CD8-positive, alpha-beta T cell (primary cell): ENCODE measurements at regions of chr19 and their contacts with region 1.

Region 1: GRCh38 chr19:5790573-5791520 is at the start of gene DUS3L:
- DNase-seq: peak; percentile 91 to 98 (median 94)
- ATAC-seq: peak; percentile 95
- H3K4me3 ChIP-seq: peak within 1 kb of the TSS; percentile 86 to 91
- H3K4me3 Mint-ChIP-seq: peak within 1 kb of the TSS; percentile 97
- H3K27ac ChIP-seq: peak within 1 kb of the TSS; percentile 94 to 97
- H3K27ac Mint-ChIP-seq: peak within 1 kb of the TSS; percentile 99
- H3K4me1 ChIP-seq: peaks cover 7% of the 10 kb centered on the region
- H3K4me1 Mint-ChIP-seq: peaks cover 17% of the 10 kb centered on the region
- H3K27me3 ChIP-seq: no peaks in the 10 kb centered on the region
- H3K27me3 Mint-ChIP-seq: peaks cover 2% of the 10 kb centered on the region
- CTCF ChIP-seq: no peak
- total RNA-seq, gene DUS3L: 174 to 192 TPM

Region 2: DNA sequence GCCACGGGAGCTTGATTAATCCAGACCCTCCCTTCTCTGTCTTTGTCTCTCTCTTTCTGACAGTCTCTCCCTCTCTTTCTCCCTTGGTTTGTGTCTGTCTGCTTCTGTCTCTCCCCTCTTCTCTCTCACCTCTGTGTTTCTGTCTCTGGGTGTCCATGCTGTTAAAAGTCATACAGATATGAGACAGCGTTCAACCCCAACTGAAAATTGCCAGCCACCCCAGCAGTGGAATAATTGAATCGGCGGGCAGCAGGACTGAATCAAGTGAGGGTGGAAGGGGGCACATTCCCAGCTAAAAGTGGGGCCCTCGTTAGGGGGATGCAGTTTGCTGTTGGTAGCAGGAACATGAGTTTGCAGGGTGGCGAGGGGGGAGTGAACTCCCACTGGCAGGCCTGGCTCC is 266.8 kb before region 1 on chr19:
- CTCF ChIA-PET with region 1: no interaction called
- POLR2A ChIA-PET with region 1: no interaction called
- intact Hi-C with region 1: no loop called
- DNase-seq: no peak
- ATAC-seq: no peak
- H3K4me3 ChIP-seq: no peak overlapping the region
- H3K4me3 Mint-ChIP-seq: no peak overlapping the region
- H3K27ac ChIP-seq: no peak overlapping the region
- H3K27ac Mint-ChIP-seq: no peak overlapping the region
- H3K4me1 ChIP-seq: no peaks in the 10 kb centered on the region
- H3K4me1 Mint-ChIP-seq: no peaks in the 10 kb centered on the region
- H3K27me3 ChIP-seq: peaks cover 0 to 7% of the 10 kb centered on the region in 2 experiments
- H3K27me3 Mint-ChIP-seq: peaks cover 36% of the 10 kb centered on the region
- CTCF ChIP-seq: no peak

Region 3: GRCh38 chr19:5680437-5681368 is 110.1 kb before region 1 on chr19 and contains the starts of genes HSD11B1L and MICOS13:
- CTCF ChIA-PET with region 1: no interaction called
- POLR2A ChIA-PET with region 1: no interaction called
- intact Hi-C with region 1: loop called in 1 of 2 experiments (anchors 2 kb)
- DNase-seq: peak; percentile 95 to 100 (median 98)
- ATAC-seq: peak; percentile 94
- H3K4me3 ChIP-seq: peak within 1 kb of the TSS; percentile 94 to 96
- H3K4me3 Mint-ChIP-seq: peak within 1 kb of the TSS; percentile 90
- H3K27ac ChIP-seq: peak within 1 kb of the TSS; percentile 98 to 100
- H3K27ac Mint-ChIP-seq: peak within 1 kb of the TSS; percentile 96
- H3K4me1 ChIP-seq: peaks cover 15% of the 10 kb centered on the region
- H3K4me1 Mint-ChIP-seq: peaks cover 25% of the 10 kb centered on the region
- H3K27me3 ChIP-seq: no peaks in the 10 kb centered on the region
- H3K27me3 Mint-ChIP-seq: no peaks in the 10 kb centered on the region
- CTCF ChIP-seq: no peak
- total RNA-seq, gene HSD11B1L: 3.1 to 4.1 TPM
- total RNA-seq, gene MICOS13: 19.6 to 24.8 TPM

Region 4: GRCh38 chr19:5719961-5720790 is 70.7 kb before region 1 on chr19 and contains the starts of genes CATSPERD and LONP1:
- CTCF ChIA-PET with region 1: no interaction called
- POLR2A ChIA-PET with region 1: interaction called, 9 read pairs
- intact Hi-C with region 1: loop called in 1 of 2 experiments (anchors 1 kb)
- DNase-seq: peak; percentile 92 to 100 (median 97)
- ATAC-seq: peak; percentile 86
- H3K4me3 ChIP-seq: peak within 1 kb of the TSS; percentile 91 to 94
- H3K4me3 Mint-ChIP-seq: peak within 1 kb of the TSS; percentile 92
- H3K27ac ChIP-seq: peak within 1 kb of the TSS; percentile 93 to 96
- H3K27ac Mint-ChIP-seq: peak within 1 kb of the TSS; percentile 96
- H3K4me1 ChIP-seq: peaks cover 23% of the 10 kb centered on the region
- H3K4me1 Mint-ChIP-seq: peaks cover 29% of the 10 kb centered on the region
- H3K27me3 ChIP-seq: no peaks in the 10 kb centered on the region
- H3K27me3 Mint-ChIP-seq: no peaks in the 10 kb centered on the region
- CTCF ChIP-seq: peak; percentile 89
- total RNA-seq, gene CATSPERD: not detected
- total RNA-seq, gene LONP1: 90.6 to 109 TPM

Region 5: GRCh38 chr19:5827891-5828660 is 37.2 kb after region 1 on chr19:
- CTCF ChIA-PET with region 1: no interaction called
- POLR2A ChIA-PET with region 1: interaction called, 11 read pairs
- intact Hi-C with region 1: loop called (anchors 1 kb)
- DNase-seq: peak; percentile 82 to 98 (median 90)
- ATAC-seq: peak; percentile 82
- H3K4me3 ChIP-seq: peak overlapping the region; percentile 56 to 70
- H3K4me3 Mint-ChIP-seq: peak overlapping the region; percentile 97
- H3K27ac ChIP-seq: peak overlapping the region; percentile 62 to 70
- H3K27ac Mint-ChIP-seq: peak overlapping the region; percentile 98
- H3K4me1 ChIP-seq: peaks cover 23% of the 10 kb centered on the region
- H3K4me1 Mint-ChIP-seq: peaks cover 15% of the 10 kb centered on the region
- H3K27me3 ChIP-seq: peaks cover 0 to 4% of the 10 kb centered on the region in 2 experiments
- H3K27me3 Mint-ChIP-seq: peaks cover 2% of the 10 kb centered on the region
- CTCF ChIP-seq: no peak